PC-9 (cell line): ENCODE measurements at regions of chr6 and their contacts with region 1.

Region 1: GRCh38 chr6:110746680-110747079 is 68.6 kb downstream of the CDK19 start:
- DNase-seq: no peak
- H3K4me3 ChIP-seq: no peak overlapping the region
- H3K27ac ChIP-seq: no peak overlapping the region
- H3K4me1 ChIP-seq: no peaks in the 10 kb centered on the region
- H3K27me3 ChIP-seq: no peaks in the 10 kb centered on the region
- CTCF ChIP-seq: no peak

Region 2: DNA sequence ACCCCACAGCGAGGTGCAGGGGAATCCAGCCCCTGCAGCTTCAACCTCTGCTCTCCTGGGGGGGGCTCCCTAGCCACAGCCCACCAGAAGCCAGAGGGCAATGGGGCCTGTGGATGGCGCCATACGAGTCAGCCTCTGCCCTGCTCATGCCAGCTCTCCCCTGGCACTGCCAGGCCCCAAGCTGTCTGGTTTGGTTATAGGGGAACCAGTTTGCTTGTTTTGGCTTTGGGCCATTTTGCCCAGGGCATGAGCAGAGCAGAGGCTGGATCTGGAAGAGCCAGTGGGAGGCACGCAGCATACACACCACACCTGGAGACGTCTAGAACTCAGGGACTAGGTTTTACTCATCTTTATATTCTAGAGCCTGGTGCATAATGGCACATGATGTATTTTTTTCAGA is 203.6 kb before region 1 on chr6:
- CTCF ChIA-PET with region 1: interaction called, 11 read pairs
- POLR2A ChIA-PET with region 1: no interaction called
- intact Hi-C with region 1: no loop called
- DNase-seq: peak; percentile 83 to 85
- H3K4me3 ChIP-seq: no peak overlapping the region
- H3K27ac ChIP-seq: no peak overlapping the region
- H3K4me1 ChIP-seq: peaks cover 47% of the 10 kb centered on the region
- H3K27me3 ChIP-seq: no peaks in the 10 kb centered on the region
- CTCF ChIP-seq: no peak

Region 3: GRCh38 chr6:110589865-110590513 is 156.7 kb before region 1 on chr6:
- CTCF ChIA-PET with region 1: no interaction called
- POLR2A ChIA-PET with region 1: no interaction called
- intact Hi-C with region 1: no loop called
- DNase-seq: no peak
- H3K4me3 ChIP-seq: no peak overlapping the region
- H3K27ac ChIP-seq: no peak overlapping the region
- H3K4me1 ChIP-seq: no peaks in the 10 kb centered on the region
- H3K27me3 ChIP-seq: no peaks in the 10 kb centered on the region
- CTCF ChIP-seq: no peak

Region 4: DNA sequence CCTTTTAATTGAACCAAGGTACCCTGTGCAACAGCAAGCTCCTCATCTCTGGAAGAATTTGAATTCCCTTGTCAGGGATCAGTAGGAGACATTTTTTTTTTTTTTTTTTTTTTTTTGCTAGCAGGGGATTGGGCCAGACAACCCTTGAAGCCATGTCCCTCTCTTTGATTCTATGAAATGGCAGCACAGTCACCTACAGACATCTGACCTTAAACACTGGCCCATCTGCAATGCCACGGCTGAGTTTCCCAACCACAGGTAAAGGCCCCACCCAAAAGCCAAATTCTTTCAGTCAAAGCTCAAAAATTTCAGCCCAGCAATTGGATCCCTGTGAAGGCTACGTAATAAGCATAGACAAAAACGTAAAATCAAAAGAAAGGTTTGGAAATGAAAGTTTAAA is 1032.4 kb after region 1 on chr6:
- CTCF ChIA-PET with region 1: no interaction called
- POLR2A ChIA-PET with region 1: interaction called, 10 read pairs
- intact Hi-C with region 1: no loop called
- DNase-seq: no peak
- H3K4me3 ChIP-seq: no peak overlapping the region
- H3K27ac ChIP-seq: no peak overlapping the region
- H3K4me1 ChIP-seq: peaks cover 7% of the 10 kb centered on the region
- H3K27me3 ChIP-seq: no peaks in the 10 kb centered on the region
- CTCF ChIP-seq: no peak